PC-9 (cell line): ENCODE measurements at regions of chr5 and their contacts with region 1.

Region 1: GRCh38 chr5:94375801-94376200 is 242.6 kb downstream of the KIAA0825 start:
- DNase-seq: no peak
- H3K4me3 ChIP-seq: no peak overlapping the region
- H3K27ac ChIP-seq: no peak overlapping the region
- H3K4me1 ChIP-seq: no peaks in the 10 kb centered on the region
- H3K27me3 ChIP-seq: no peaks in the 10 kb centered on the region
- CTCF ChIP-seq: no peak

Region 2: DNA sequence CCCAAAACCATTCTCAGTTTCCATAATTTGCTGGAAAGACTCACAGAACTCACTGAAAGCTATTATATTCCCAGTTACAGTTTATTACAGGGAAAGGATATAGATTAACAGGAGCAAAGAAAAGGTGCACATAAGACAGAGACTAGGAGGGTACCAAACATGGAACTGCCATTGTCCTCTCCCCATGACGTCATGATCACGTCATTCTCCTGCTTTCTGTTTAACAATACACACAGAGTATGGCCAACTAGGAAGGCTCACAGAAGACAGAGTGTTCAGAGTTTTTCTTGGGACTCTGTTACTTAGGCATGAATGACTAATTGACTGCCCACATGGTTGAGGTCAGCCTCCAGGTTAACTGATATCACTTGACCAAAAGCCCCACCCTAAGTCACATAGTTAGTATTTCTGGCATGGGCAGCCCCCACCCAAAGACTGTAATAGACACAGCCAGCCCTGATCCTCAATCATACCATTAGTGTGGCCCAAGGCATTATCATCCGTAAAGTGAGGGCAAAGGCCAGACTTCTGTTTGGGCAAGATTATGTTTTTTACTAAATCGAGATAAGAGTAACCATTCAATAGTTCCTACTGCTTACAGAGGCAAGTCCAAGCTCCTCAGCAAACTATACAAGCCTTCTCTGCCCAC is 280.9 kb before region 1 on chr5:
- CTCF ChIA-PET with region 1: no interaction called
- POLR2A ChIA-PET with region 1: interaction called, 13 read pairs
- intact Hi-C with region 1: no loop called
- DNase-seq: no peak
- H3K4me3 ChIP-seq: no peak overlapping the region
- H3K27ac ChIP-seq: no peak overlapping the region
- H3K4me1 ChIP-seq: no peaks in the 10 kb centered on the region
- H3K27me3 ChIP-seq: no peaks in the 10 kb centered on the region
- CTCF ChIP-seq: no peak